ENCODE measurements at regions of chr1 and their contacts with region 1.

Region 1: GRCh38 chr1:165928075-165928731 is 100.8 kb downstream of the UCK2 start:
- DNase-seq: peak in 5 of 10 donors; percentile 38 to 71 (median 44)

Region 2: GRCh38 chr1:165726169-165726568 is 202.0 kb before region 1 on chr1:
- intact Hi-C with region 1: no loop called
- DNase-seq: no peak

Region 3: DNA sequence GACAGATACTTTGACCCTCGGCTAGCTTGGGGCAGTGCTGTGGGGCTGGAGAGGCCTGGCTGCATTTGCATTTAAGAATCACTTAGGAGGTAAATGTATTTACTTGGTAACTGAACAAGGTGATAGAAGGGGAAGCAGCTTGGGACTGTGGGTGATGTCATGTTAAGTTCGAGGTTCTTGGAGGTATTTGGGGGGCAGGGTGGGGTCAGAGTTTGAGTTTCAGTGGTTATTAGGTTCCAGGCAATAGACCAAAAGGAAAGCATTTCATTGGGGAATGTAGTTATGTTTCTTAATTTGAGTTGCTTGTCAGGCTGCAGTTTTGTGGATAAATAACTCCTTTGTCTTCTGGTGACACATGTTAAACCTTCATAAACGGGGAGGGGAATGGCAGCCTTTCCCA is 241.0 kb after region 1 on chr1:
- intact Hi-C with region 1: loop called (anchors 2 kb)
- DNase-seq: no peak

Region 4: DNA sequence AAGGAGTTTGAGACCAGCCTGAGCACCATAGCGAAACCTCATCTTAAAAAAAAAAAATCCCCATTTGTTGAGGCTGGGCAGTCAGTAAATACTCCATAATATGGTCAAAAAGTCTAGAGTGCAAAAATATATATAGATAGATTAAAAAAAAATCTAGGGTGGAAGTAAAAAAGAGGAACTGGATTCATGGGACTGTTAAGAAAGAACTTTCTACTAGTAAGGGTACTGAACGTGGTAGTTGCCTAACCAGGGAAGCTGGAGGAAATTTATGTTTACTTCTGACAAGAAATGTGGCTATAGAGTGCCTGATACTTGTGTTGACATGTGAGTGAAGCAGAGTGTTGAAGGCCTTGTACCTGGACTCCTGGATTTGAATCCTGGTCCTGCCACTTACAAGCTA is 504.5 kb after region 1 on chr1:
- intact Hi-C with region 1: loop called (anchors 10 kb)
- DNase-seq: no peak

Region 5: DNA sequence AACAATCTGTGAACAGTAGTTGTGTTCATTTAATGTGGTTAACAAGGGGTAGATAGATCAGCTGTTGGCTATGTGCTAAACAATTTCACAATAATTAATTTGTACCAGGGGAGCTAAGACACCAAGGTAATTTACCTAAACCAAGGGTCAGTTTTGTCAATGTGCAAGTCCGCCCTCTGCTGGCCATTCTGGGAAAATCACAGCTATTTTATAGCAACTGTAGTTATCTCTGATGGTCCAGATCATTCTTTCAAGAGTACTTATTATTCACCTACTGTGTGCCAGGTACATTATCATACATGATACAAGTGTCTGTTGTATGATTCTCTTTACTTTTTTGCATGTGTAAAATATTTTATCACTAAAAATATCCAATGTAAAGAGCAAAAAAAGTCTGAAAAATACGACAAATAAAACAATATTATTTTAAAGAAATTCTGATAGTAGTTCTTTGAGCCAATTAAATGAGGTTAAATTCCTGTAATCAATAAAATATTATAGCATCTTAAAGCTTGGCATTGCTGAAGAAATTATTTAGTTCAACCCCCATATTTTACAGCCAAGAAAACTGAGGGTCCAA is 550.9 kb after region 1 on chr1:
- intact Hi-C with region 1: loop called (anchors 1 kb)
- DNase-seq: peak in 8 of 10 donors; percentile 18 to 89 (median 60)

Measured in posterior cingulate gyrus (tissue), 11 donors.